Heart left ventricle (tissue), 16 donors: ENCODE measurements at regions of chr9 and their contacts with region 1.

Region 1: DNA sequence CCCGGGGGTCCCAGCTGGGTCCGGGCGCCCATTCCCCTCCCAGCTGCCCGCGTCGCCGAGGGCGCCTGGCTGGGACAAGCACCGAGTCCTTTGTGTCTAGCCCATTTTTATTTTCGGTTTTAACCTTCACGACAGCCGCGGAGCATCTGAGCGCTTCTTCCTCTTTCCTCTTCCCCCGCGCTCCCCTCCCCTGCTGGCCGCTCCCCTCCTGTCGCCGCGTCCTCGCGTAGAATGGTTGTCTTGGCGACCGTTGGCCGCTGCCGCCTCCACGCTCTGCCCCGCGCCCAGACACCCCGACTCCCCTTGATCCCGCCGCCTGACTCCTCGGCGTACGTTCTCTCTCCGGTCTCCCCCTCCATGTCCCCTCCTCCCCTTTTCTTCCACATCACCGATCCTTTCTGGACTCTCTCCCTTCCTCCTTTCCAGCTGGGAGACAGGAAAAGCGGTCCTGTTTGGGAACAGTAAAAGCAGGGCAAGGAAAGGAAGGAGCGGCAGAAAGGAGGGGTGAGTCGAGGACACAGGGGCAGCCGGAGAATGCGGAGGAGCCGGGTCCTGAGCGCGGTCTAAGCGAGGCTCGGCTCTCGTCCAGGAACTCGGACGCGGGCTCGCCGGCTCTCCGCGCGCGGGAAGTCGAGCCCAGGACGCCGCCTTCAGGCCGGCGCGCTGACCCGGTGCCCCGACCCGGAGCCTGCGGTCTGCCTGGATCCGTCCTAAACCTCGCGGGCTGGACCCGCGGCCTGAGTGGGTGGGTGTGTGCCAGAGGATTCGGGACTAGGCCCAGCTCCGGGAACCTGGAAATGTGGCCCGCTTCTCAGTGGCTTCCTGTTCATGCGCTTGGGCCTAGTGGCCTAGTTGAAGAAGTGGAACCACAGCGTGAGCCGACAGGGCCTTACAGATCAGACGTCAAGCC is 841 bp downstream of the CDKN2B-AS1 start:
- DNase-seq: peak; percentile 72 to 89 (median 77)
- ATAC-seq: peak; percentile 65 to 92 (median 87)
- H3K4me3 ChIP-seq: peak overlapping the region; percentile 61 to 95 (median 83)
- H3K27ac ChIP-seq: peak overlapping the region in 11 of 12 donors; percentile 57 to 98 (median 74)
- H3K4me1 ChIP-seq: peaks cover 0 to 27% (median 5%) of the 10 kb centered on the region in 12 donors
- H3K27me3 ChIP-seq: peaks cover 4 to 35% (median 25%) of the 10 kb centered on the region in 9 donors
- CTCF ChIP-seq: peak in 8 of 12 donors; percentile 10 to 44 (median 19)
- POLR2A ChIP-seq: no peak

Region 2: GRCh38 chr9:21931428-21931827 is 64.0 kb before region 1 on chr9:
- intact Hi-C with region 1: no loop called
- DNase-seq: no peak
- ATAC-seq: no peak
- H3K4me3 ChIP-seq: no peak overlapping the region
- H3K27ac ChIP-seq: no peak overlapping the region
- H3K4me1 ChIP-seq: no peaks in the 10 kb centered on the region
- H3K27me3 ChIP-seq: no peaks in the 10 kb centered on the region
- CTCF ChIP-seq: no peak
- POLR2A ChIP-seq: no peak

Region 3: GRCh38 chr9:22052376-22052945 is 57.0 kb after region 1 on chr9:
- intact Hi-C with region 1: loop called in 1 of 10 experiments (anchors 10 kb)
- DNase-seq: no peak
- ATAC-seq: no peak
- H3K4me3 ChIP-seq: no peak overlapping the region
- H3K27ac ChIP-seq: no peak overlapping the region
- H3K4me1 ChIP-seq: peaks cover 0 to 25% (median 0%) of the 10 kb centered on the region in 12 donors
- H3K27me3 ChIP-seq: no peaks in the 10 kb centered on the region
- CTCF ChIP-seq: no peak
- POLR2A ChIP-seq: no peak

Region 4: GRCh38 chr9:22119537-22120158 is 124.2 kb after region 1 on chr9:
- intact Hi-C with region 1: loop called in 2 of 10 experiments (anchors 10 kb)
- DNase-seq: peak in 1 of 5 donors; percentile 7
- ATAC-seq: peak in 3 of 4 donors; percentile 63 to 79 (median 79)
- H3K4me3 ChIP-seq: no peak overlapping the region
- H3K27ac ChIP-seq: no peak overlapping the region
- H3K4me1 ChIP-seq: peaks cover 0 to 5% (median 0%) of the 10 kb centered on the region in 12 donors
- H3K27me3 ChIP-seq: peaks cover 0 to 3% (median 0%) of the 10 kb centered on the region in 9 donors
- CTCF ChIP-seq: peak; percentile 13 to 52 (median 31)
- POLR2A ChIP-seq: no peak